ENCODE measurements at regions of chr3 and their contacts with region 1.

Region 1: DNA sequence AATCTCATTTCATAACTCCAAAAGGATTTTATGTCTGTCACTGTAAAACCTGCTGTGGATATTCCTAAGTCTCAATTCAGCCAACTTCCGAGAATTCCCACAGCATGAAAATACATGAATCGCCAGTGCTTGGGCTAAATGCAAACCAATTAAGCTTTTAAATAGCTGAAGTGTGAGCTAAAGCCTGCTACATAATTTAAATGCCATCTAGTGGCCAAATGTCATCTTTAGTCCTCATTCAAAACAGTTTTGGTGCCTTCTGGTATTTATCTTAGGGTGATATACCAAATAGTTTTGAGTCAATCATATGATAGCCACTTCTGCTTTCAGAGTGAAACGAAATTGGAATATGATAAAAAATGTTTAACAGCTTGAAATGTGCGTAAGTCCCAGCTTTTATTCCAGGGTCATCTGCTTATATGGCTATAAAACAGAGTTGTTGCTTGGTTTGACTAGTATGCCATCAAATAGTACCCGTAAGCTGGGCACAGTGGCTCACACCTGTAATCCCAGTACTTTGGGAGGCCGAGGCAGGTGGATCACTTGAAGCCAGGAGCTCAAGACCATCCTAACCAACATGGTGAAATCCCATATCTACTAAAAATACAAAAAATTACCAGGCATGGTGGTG is 41.8 kb upstream of the CCNL1 start:
- DNase-seq: no peak
- ATAC-seq: peak in 7 of 8 donors; percentile 38 to 75 (median 59)
- H3K4me3 ChIP-seq: no peak overlapping the region
- H3K27ac ChIP-seq: no peak overlapping the region
- H3K4me1 ChIP-seq: peaks cover 0 to 20% (median 8%) of the 10 kb centered on the region in 9 donors
- H3K27me3 ChIP-seq: no peaks in the 10 kb centered on the region
- CTCF ChIP-seq: peak; percentile 28 to 71 (median 59)

Region 2: DNA sequence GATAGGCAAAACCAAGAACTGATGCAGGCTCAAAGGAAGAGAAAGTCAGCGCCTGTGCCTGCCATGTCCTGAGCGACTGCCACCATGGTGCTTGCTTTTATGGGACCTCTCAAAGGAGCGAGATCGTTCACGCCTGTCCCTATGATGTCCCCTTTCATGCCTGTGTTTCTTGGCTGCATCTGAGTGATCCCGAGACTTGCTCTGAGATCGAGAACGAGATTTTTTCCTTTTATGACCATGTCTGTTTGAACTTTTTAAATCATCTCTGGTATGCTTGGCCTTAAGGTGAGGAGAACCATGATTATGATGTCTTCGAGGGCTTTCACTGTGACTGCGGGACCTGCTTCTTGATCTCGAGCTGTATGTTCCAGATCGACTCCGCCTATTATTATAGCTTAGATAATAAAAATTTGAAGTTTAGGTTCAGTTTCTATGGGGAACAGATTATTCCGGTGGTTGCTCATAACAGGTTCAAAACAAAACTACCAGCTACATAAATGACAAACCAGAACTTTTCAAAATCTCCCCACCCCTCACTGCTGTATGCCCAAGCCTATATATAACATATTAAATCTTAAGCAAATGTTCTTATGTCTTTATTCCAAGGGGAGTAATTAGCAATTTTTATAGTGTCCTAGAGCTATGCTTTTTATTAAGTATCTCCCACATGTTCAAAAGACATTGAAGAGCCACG is 53.4 kb before region 1 on chr3:
- intact Hi-C with region 1: loop called in 1 of 10 experiments (anchors 5 kb)
- DNase-seq: no peak
- ATAC-seq: no peak
- H3K4me3 ChIP-seq: no peak overlapping the region
- H3K27ac ChIP-seq: no peak overlapping the region
- H3K4me1 ChIP-seq: peaks cover 0 to 11% (median 3%) of the 10 kb centered on the region in 9 donors
- H3K27me3 ChIP-seq: no peaks in the 10 kb centered on the region
- CTCF ChIP-seq: no peak

Region 3: GRCh38 chr3:157354722-157355121 is 153.0 kb after region 1 on chr3:
- intact Hi-C with region 1: loop called in 4 of 10 experiments (anchors 10 kb)
- DNase-seq: no peak
- ATAC-seq: no peak
- H3K4me3 ChIP-seq: no peak overlapping the region
- H3K27ac ChIP-seq: no peak overlapping the region
- H3K4me1 ChIP-seq: peaks cover 0 to 1% (median 0%) of the 10 kb centered on the region in 9 donors
- H3K27me3 ChIP-seq: peaks cover 0 to 3% (median 0%) of the 10 kb centered on the region in 7 donors
- CTCF ChIP-seq: peak in 7 of 9 donors; percentile 15 to 47 (median 32)

Region 4: GRCh38 chr3:157447026-157447694 is 245.4 kb after region 1 on chr3:
- intact Hi-C with region 1: loop called in 1 of 10 experiments (anchors 10 kb)
- DNase-seq: no peak
- ATAC-seq: peak in 1 of 8 donors; percentile 47
- H3K4me3 ChIP-seq: no peak overlapping the region
- H3K27ac ChIP-seq: no peak overlapping the region
- H3K4me1 ChIP-seq: peaks cover 0 to 32% (median 0%) of the 10 kb centered on the region in 9 donors
- H3K27me3 ChIP-seq: no peaks in the 10 kb centered on the region
- CTCF ChIP-seq: peak in 8 of 9 donors; percentile 27 to 59 (median 40)

Region 5: GRCh38 chr3:157499342-157499963 is 297.7 kb after region 1 on chr3:
- intact Hi-C with region 1: loop called in 5 of 10 experiments (anchors 2 to 5 kb)
- DNase-seq: peak in 1 of 2 donors; percentile 8
- ATAC-seq: peak in 4 of 8 donors; percentile 16 to 56 (median 32)
- H3K4me3 ChIP-seq: peak overlapping the region in 8 of 10 donors; percentile 16 to 45 (median 35)
- H3K27ac ChIP-seq: no peak overlapping the region
- H3K4me1 ChIP-seq: peaks cover 0 to 13% (median 9%) of the 10 kb centered on the region in 9 donors
- H3K27me3 ChIP-seq: peaks cover 0 to 53% (median 26%) of the 10 kb centered on the region in 7 donors
- CTCF ChIP-seq: no peak

Measured in heart right ventricle (tissue), 16 donors.